Motor neuron (in vitro differentiated cells): ENCODE measurements at regions of chr1 and their contacts with region 1.

Region 1: DNA sequence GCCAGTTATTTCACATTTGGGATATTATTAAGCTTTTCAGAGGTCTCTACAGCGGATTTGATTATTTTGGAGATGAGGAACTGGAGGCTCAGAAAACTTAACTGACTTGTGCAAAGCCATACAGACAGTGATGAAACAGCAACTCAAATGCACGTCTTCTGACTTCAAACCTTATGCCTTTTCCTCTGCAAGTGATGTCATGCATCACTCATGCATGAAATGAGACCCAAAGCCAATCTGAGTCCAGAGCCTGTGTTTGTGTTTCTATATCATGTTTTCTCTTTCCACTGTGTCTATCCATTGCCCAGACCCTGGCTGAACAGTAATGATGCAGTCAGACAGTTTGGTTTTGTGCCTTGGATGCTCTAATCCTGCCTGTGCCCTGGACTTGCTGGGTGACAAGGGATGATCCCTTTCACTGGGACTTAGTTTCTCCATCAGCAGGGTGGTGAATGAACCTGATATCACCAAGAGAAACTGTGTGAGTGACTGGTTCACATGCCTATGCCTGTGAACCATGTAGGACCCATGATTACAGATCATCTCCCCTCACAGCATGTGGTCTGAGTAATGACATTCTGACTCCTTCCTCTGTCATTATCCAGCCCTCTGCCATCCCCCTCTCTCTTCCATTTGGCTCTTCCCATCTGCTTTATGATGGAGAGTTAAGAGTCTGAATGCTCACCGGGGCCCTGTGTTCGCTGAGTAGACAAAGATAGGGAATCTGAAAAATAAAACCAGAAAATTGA is 33.4 kb downstream of the SLAMF6 start:
- ATAC-seq: peak in 5 of 8 experiments; percentile 35 to 77 (median 47)
- H3K4me3 ChIP-seq: no peak overlapping the region
- H3K27ac ChIP-seq: no peak overlapping the region
- H3K4me1 ChIP-seq: peaks cover 0 to 9% of the 10 kb centered on the region in 2 donors

Region 2: GRCh38 chr1:160354388-160354985 is 135.2 kb before region 1 on chr1:
- in situ Hi-C with region 1: no loop called
- ATAC-seq: peak; percentile 35 to 77 (median 60)
- H3K4me3 ChIP-seq: no peak overlapping the region
- H3K27ac ChIP-seq: no peak overlapping the region
- H3K4me1 ChIP-seq: no peaks in the 10 kb centered on the region

Region 3: DNA sequence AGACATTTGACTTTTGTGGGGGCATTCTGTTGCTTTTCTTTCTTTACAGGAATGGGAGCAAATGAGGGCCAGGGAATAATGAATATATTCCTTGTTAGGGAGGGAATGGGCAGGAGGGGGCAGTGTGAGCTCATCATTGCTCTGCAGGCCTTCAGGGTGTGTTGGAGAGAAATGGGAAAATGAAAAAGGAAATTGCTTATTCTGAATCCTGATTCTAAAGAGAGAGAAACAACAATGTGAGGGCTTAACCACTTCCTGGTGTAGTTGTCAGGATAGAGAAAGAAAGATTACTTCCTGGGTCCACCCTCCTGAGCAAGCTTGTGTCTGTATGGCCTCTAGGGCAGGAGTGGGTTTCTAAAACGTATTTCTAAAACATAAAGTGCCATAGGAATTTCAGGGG is 61.0 kb before region 1 on chr1:
- in situ Hi-C with region 1: loop called in 1 of 9 experiments (anchors 10 kb)
- ATAC-seq: peak; percentile 64 to 94 (median 78)
- H3K4me3 ChIP-seq: no peak overlapping the region
- H3K27ac ChIP-seq: no peak overlapping the region
- H3K4me1 ChIP-seq: peaks cover 8 to 10% of the 10 kb centered on the region in 2 donors

Region 4: GRCh38 chr1:160618763-160619274 is 129.1 kb after region 1 on chr1:
- in situ Hi-C with region 1: no loop called
- ATAC-seq: no peak
- H3K4me3 ChIP-seq: no peak overlapping the region
- H3K27ac ChIP-seq: no peak overlapping the region
- H3K4me1 ChIP-seq: no peaks in the 10 kb centered on the region